ENCODE measurements at regions of chr3 and their contacts with region 1.

Region 1: GRCh38 chr3:185912929-185913901 is 24.6 kb downstream of the TRA2B start:
- H3K4me3 Mint-ChIP-seq: no peak overlapping the region
- H3K27ac Mint-ChIP-seq: no peak overlapping the region
- H3K4me1 Mint-ChIP-seq: no peaks in the 10 kb centered on the region
- H3K27me3 Mint-ChIP-seq: no peaks in the 10 kb centered on the region

Region 2: GRCh38 chr3:185733980-185734724 is 179.1 kb before region 1 on chr3:
- intact Hi-C with region 1: loop called (anchors 10 kb)
- H3K4me3 Mint-ChIP-seq: no peak overlapping the region
- H3K27ac Mint-ChIP-seq: no peak overlapping the region
- H3K4me1 Mint-ChIP-seq: peaks cover 30% of the 10 kb centered on the region
- H3K27me3 Mint-ChIP-seq: no peaks in the 10 kb centered on the region

Measured in dendritic cell treated with granulocyte-macrophage colony-stimulating factor and Interleukin-4, amounts not matched to agents 40 ng/mL and 50 ng/mL, for 4 days (primary cell).